ENCODE measurements at regions of chr11 and their contacts with region 1.

Region 1: DNA sequence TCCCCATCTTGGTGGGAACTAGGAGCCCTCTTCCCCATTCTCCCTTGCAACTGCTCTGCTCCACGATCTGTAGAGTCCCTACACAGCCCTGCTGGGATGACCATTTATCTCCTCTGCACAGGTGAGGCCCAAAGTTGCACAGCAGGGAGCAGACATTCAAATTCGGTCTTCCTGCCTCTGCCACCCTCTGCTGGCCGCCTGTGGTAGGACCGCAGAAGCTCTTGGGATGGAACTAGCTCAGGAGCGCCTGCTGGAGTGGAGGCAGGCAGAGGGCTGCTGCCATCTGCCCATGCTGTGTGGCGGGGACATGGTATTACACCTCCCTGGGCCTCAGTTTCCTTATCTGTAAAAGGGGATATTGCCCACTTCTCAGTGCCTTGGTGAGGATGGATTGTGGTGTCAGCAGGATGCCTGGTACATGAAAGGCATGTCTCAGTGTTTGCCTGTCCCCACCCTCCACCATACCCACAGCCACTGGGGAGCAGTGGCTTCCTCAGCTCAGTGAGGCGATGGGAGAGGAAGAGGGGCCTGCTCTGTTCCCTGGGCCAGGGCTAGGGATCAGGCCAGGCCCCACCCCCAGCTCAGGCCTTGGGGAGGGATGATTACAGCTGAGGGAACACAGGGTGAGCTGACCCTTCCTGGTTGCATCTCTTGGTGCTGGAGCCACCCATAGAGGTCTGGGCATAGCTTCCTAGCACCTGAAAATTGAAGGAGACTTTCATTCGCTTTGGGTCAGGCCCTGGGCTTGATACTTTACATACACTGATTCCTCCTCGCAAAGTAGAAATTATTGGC is 11.3 kb upstream of the OMP start:
- DNase-seq: peak; percentile 64 to 86
- H3K4me3 ChIP-seq: no peak overlapping the region
- H3K27ac ChIP-seq: no peak overlapping the region
- H3K4me1 ChIP-seq: peaks cover 47% of the 10 kb centered on the region
- H3K27me3 ChIP-seq: no peaks in the 10 kb centered on the region
- CTCF ChIP-seq: peak; percentile 99

Region 2: GRCh38 chr11:76974179-76974891 is 117.0 kb before region 1 on chr11:
- CTCF ChIA-PET with region 1: no interaction called
- POLR2A ChIA-PET with region 1: no interaction called
- intact Hi-C with region 1: no loop called
- DNase-seq: no peak
- H3K4me3 ChIP-seq: no peak overlapping the region
- H3K27ac ChIP-seq: no peak overlapping the region
- H3K4me1 ChIP-seq: no peaks in the 10 kb centered on the region
- H3K27me3 ChIP-seq: no peaks in the 10 kb centered on the region
- CTCF ChIP-seq: no peak

Region 3: DNA sequence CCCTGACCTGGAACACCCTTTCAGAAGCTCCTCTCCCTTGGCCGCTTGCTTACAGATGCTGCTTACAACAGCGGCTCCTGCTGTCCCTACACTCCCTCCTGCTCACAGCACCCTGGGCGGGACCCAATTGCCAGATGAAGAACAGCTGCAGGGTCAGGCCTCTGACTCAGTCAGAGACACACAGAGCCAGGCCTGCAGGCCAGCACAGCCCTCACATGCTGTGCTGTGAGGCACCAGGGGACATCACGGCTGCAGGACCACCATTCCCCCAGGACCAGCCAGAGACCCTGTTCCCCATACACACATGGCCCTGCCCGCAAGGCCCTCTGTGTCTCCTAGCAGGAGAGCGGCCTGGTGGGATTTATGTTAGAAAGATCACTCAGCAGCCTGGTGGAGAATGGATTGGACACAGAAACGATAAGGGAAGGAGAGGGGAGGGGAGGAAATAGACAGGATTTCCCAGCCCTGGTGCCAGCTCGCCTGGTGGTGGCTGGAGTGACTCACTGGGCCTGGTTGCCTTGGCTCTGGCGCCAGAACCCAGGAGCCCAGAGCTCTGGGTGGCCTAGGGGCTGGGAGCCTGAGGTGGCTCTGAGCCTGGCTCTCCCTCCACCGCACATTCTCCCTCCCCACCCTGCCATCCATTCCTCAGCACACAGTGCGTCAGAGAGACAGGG is 17.9 kb before region 1 on chr11:
- CTCF ChIA-PET with region 1: interaction called, 8 read pairs
- POLR2A ChIA-PET with region 1: no interaction called
- intact Hi-C with region 1: loop called (anchors 1 kb)
- DNase-seq: peak; percentile 75 to 83
- H3K4me3 ChIP-seq: no peak overlapping the region
- H3K27ac ChIP-seq: peak overlapping the region; percentile 31
- H3K4me1 ChIP-seq: peaks cover 50% of the 10 kb centered on the region
- H3K27me3 ChIP-seq: no peaks in the 10 kb centered on the region
- CTCF ChIP-seq: no peak; the same call in 1 of the 2 replicates

Region 4: DNA sequence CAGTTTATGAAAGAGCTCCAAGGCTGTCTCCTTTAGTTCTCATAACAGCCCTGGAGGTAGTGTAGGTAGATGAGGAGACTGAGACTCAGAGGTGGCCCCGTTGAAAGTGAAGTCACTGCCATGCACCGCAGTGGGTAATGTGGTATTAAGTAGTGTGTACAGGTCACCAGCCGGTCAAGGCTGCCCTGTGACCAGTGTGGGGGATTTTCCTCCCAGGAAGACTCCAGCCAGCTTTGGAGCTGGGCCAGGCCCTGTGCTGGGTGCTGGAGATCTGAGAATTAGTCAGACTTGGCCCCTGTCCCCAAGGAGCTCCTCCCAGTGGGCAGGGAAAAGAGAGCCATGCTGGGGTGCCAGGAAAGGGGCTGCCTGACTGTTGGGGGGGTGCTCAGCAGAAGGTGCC is 16.6 kb after region 1 on chr11:
- CTCF ChIA-PET with region 1: interaction called, 13 read pairs
- POLR2A ChIA-PET with region 1: no interaction called
- intact Hi-C with region 1: no loop called
- DNase-seq: peak; percentile 76 to 83
- H3K4me3 ChIP-seq: no peak overlapping the region
- H3K27ac ChIP-seq: no peak overlapping the region
- H3K4me1 ChIP-seq: peaks cover 26% of the 10 kb centered on the region
- H3K27me3 ChIP-seq: no peaks in the 10 kb centered on the region
- CTCF ChIP-seq: no peak

Region 5: GRCh38 chr11:77171885-77172499 is 80.6 kb after region 1 on chr11:
- CTCF ChIA-PET with region 1: no interaction called
- POLR2A ChIA-PET with region 1: no interaction called
- intact Hi-C with region 1: no loop called
- DNase-seq: no peak
- H3K4me3 ChIP-seq: no peak overlapping the region
- H3K27ac ChIP-seq: no peak overlapping the region
- H3K4me1 ChIP-seq: peaks cover 8% of the 10 kb centered on the region; the same call in 1 of the 2 replicates
- H3K27me3 ChIP-seq: peaks cover 10% of the 10 kb centered on the region; the same call in 1 of the 2 replicates
- CTCF ChIP-seq: no peak

Region 6: GRCh38 chr11:77299528-77299993 is 208.2 kb after region 1 on chr11:
- CTCF ChIA-PET with region 1: no interaction called
- POLR2A ChIA-PET with region 1: no interaction called
- intact Hi-C with region 1: no loop called
- DNase-seq: peak; percentile 77 to 98
- H3K4me3 ChIP-seq: no peak overlapping the region
- H3K27ac ChIP-seq: peak overlapping the region; percentile 95
- H3K4me1 ChIP-seq: peaks cover 27% of the 10 kb centered on the region
- H3K27me3 ChIP-seq: no peaks in the 10 kb centered on the region
- CTCF ChIP-seq: no peak